ENCODE measurements at regions of chr3 and their contacts with region 1.

Region 1: GRCh38 chr3:149808209-149808829 is 4.7 kb upstream of the RNF13 start:
- DNase-seq: peak; percentile 83
- H3K4me3 Mint-ChIP-seq: no peak overlapping the region
- H3K27ac Mint-ChIP-seq: no peak overlapping the region
- H3K4me1 Mint-ChIP-seq: peaks cover 16% of the 10 kb centered on the region
- H3K27me3 Mint-ChIP-seq: no peaks in the 10 kb centered on the region
- CTCF ChIP-seq: peak; percentile 93

Region 2: DNA sequence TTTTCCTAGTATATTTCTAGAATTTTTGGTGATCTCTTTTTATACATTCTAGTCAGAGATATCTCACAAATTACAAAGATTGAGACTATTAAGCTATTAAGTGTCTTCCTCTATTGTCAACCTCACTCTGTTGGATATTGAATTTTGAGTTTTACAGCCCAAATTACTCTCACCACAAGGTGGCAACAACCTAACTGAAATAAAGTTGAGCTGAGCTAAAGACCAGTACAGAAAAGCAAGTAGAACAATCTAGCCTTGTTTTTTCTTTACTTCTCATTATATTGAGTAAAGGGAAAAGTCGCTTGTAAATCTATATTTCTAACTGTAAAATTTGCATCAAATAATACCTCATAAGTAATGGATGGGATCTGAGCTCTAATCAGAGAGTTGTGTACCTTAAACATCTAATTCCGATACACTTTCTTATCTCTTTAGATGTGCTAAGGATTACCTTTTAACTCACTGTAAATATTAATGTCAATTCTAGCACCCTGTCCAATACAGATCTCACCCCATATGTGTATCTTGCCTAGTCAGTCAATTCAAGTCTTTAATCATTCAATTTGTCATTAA is 42.5 kb before region 1 on chr3:
- CTCF ChIA-PET with region 1: interaction called, 167 read pairs
- intact Hi-C with region 1: loop called (anchors 1 kb)
- DNase-seq: peak; percentile 28
- H3K4me3 Mint-ChIP-seq: no peak overlapping the region
- H3K27ac Mint-ChIP-seq: no peak overlapping the region
- H3K4me1 Mint-ChIP-seq: no peaks in the 10 kb centered on the region
- H3K27me3 Mint-ChIP-seq: no peaks in the 10 kb centered on the region
- CTCF ChIP-seq: peak; percentile 49

Region 3: DNA sequence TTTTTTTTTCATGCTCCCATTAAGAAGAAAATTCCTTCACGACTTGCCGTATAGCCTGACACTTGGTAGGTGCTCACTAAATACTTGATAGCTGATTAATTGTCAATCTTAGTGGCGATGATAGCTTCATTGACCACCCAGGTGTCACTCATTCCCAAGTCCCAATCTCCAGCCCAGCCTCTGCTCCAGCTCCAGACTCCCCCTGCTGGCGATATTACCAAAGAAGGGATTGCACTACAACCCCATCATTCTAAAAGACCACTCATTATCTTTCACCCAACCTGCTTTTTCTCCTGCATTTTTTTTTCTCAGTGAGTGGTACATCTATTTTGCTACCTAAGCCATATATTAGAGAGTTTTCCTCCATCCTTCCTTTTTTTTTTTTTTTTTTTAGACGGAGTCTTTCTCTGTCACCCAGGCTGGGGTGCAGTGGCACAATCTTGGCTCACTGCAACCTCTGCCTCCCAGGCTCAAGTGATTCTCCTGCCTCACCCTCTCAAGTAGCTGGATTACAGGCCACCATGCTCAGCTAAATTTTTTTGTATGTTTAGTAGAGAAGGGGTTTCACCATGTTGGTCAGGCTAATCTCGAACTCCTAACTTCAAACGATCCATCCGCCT is 36.6 kb before region 1 on chr3:
- CTCF ChIA-PET with region 1: interaction called, 167 read pairs
- intact Hi-C with region 1: no loop called
- DNase-seq: peak; percentile 87
- H3K4me3 Mint-ChIP-seq: no peak overlapping the region
- H3K27ac Mint-ChIP-seq: no peak overlapping the region
- H3K4me1 Mint-ChIP-seq: no peaks in the 10 kb centered on the region
- H3K27me3 Mint-ChIP-seq: no peaks in the 10 kb centered on the region
- CTCF ChIP-seq: peak; percentile 95

Region 4: GRCh38 chr3:149820180-149820579 is 11.9 kb after region 1 on chr3:
- CTCF ChIA-PET with region 1: interaction called, 14 read pairs
- intact Hi-C with region 1: no loop called
- DNase-seq: peak; percentile 16
- H3K4me3 Mint-ChIP-seq: no peak overlapping the region
- H3K27ac Mint-ChIP-seq: no peak overlapping the region
- H3K4me1 Mint-ChIP-seq: peaks cover 57% of the 10 kb centered on the region
- H3K27me3 Mint-ChIP-seq: no peaks in the 10 kb centered on the region
- CTCF ChIP-seq: no peak

Region 5: DNA sequence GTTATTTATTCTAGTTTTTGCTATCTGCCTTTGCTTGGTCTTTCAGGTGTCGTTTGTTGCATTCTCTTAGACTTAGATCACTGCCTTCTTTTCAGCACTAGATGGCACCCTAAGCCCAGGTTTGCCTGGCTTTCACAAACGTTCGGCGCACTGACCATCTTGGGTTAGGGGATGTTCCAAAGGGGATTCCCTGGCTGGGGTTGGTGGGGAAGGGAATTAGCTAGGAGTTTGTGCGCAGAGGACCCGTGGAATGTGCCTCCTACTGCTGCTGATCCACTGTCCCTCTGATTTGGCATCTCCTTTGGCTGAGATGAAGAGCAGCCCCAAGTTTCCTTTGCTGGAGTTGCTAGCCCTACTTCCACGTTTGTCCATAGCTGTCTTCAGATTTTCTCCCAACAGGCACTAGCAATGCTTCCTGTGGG is 128.5 kb after region 1 on chr3:
- CTCF ChIA-PET with region 1: no interaction called
- intact Hi-C with region 1: no loop called
- DNase-seq: peak; percentile 68
- H3K4me3 Mint-ChIP-seq: no peak overlapping the region
- H3K27ac Mint-ChIP-seq: no peak overlapping the region
- H3K4me1 Mint-ChIP-seq: no peaks in the 10 kb centered on the region
- H3K27me3 Mint-ChIP-seq: no peaks in the 10 kb centered on the region
- CTCF ChIP-seq: peak; percentile 88

Region 6: DNA sequence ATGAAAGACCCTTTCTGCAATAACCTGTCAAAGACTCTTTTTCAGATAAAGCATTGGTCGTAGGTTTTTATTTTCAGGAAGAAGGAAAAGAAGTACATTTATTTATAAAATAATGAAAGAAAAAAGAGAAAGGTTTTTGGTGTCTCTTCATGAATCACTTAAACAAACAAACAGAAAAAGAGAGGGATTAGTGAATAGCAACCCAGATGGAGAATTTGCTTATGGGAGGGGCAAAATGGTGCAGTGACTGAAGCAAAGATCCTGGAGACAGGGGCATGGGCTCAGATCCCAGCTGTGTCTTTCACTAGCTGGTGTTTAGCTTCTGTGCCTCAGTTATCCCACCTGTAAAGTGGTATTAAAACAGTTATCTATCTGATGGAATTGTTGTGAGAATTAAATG is 241.0 kb after region 1 on chr3:
- CTCF ChIA-PET with region 1: no interaction called
- intact Hi-C with region 1: no loop called
- DNase-seq: no peak
- H3K4me3 Mint-ChIP-seq: no peak overlapping the region
- H3K27ac Mint-ChIP-seq: no peak overlapping the region
- H3K4me1 Mint-ChIP-seq: no peaks in the 10 kb centered on the region
- H3K27me3 Mint-ChIP-seq: peaks cover 61% of the 10 kb centered on the region
- CTCF ChIP-seq: no peak